ENCODE measurements at regions of chr10 and their contacts with region 1.

Region 1: GRCh38 chr10:23994479-23995046 is 214.4 kb upstream of the KIAA1217 start:
- DNase-seq: no peak
- H3K4me3 ChIP-seq: no peak overlapping the region
- H3K27ac ChIP-seq: no peak overlapping the region
- H3K4me1 ChIP-seq: no peaks in the 10 kb centered on the region
- H3K27me3 ChIP-seq: no peaks in the 10 kb centered on the region
- CTCF ChIP-seq: peak in 5 of 6 experiments; percentile 74 to 88 (median 82)
- POLR2A ChIP-seq: no peak

Region 2: DNA sequence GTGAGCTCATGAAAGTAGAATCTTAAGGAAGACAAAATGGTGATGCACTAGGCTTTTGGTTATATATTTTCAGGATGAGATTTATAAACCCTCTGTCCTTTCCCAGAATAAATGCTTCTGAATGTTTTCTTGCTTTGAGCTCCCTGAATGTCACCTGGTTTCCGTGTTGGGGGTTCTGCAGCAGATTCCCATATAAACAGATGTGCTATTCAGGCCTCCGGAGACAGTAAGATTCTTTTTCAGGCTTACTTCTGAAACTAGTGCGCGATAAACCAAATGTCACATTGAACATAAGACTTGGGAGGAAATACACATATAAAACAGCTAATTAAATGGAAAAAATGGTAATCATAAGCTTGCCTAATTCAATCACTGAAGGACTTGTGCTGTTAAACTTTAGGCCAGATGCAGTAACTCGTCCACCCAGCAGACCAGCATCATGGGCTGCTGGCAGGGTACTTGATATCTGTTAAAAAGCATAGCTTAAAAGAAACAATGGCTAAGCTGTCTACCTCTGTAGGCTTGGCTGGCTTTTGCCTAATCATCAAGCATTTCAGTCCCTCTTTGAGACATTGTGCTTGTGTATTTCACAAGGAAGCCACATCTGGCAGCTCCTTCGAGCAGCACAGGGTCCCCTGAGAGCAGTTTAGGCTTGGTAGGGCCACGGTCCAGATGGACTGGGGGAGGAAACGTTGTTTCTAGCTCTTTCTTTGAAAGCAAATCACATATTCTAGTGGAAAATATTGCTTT is 66.8 kb before region 1 on chr10:
- intact Hi-C with region 1: no loop called
- DNase-seq: no peak
- H3K4me3 ChIP-seq: no peak overlapping the region
- H3K27ac ChIP-seq: no peak overlapping the region
- H3K4me1 ChIP-seq: no peaks in the 10 kb centered on the region
- H3K27me3 ChIP-seq: no peaks in the 10 kb centered on the region
- CTCF ChIP-seq: no peak
- POLR2A ChIP-seq: no peak

Region 3: DNA sequence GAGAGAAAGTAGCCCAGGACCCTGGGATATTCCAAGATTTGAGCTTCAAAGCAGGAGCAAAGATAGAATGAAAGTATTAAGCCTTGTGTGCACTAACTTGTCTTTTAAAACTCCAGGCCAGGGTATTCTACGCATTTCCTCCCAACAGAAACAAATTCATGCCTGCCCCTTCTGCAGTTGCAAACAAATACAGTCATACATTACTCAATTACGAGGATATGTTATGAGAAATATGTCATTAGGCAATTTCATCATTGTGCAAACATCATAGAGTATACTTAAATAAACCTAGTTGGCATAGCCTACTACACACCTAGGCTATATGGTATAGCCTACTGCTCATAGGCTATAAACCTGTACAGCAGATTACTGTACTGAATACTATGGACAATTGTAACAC is 59.9 kb after region 1 on chr10:
- intact Hi-C with region 1: no loop called
- DNase-seq: no peak
- H3K4me3 ChIP-seq: no peak overlapping the region
- H3K27ac ChIP-seq: no peak overlapping the region
- H3K4me1 ChIP-seq: no peaks in the 10 kb centered on the region
- H3K27me3 ChIP-seq: no peaks in the 10 kb centered on the region
- CTCF ChIP-seq: no peak
- POLR2A ChIP-seq: no peak

Region 4: GRCh38 chr10:24197263-24197662 is 202.7 kb after region 1 on chr10:
- intact Hi-C with region 1: loop called (anchors 5 kb)
- DNase-seq: no peak
- H3K4me3 ChIP-seq: no peak overlapping the region
- H3K27ac ChIP-seq: no peak overlapping the region
- H3K4me1 ChIP-seq: peaks cover 0 to 9% (median 0%) of the 10 kb centered on the region in 3 donors
- H3K27me3 ChIP-seq: no peaks in the 10 kb centered on the region
- CTCF ChIP-seq: no peak
- POLR2A ChIP-seq: no peak

Region 5: DNA sequence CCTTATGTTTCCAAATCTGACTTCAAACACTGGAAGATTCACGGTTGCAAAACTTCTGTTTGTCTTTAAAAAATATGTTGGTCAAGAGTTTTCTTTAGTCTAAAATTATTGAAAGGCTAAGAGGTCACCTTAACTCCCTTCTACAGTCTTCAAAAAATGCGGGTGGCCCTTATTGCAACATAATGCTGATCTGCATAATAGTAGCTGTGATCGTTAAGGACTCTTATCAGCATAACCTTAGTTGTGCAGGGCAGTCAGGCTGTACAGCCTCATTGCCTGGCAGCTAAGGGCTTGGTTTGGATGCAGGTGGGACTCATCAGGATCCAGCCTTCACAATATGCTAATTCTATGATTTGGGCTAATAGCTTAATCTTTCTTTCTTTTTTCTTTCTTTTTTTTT is 229.4 kb after region 1 on chr10:
- intact Hi-C with region 1: no loop called
- DNase-seq: no peak
- H3K4me3 ChIP-seq: no peak overlapping the region
- H3K27ac ChIP-seq: no peak overlapping the region
- H3K4me1 ChIP-seq: no peaks in the 10 kb centered on the region
- H3K27me3 ChIP-seq: no peaks in the 10 kb centered on the region
- CTCF ChIP-seq: no peak
- POLR2A ChIP-seq: no peak

Region 6: GRCh38 chr10:24360282-24361127 is 365.9 kb after region 1 on chr10:
- intact Hi-C with region 1: loop called (anchors 10 kb)
- DNase-seq: no peak
- H3K4me3 ChIP-seq: no peak overlapping the region
- H3K27ac ChIP-seq: no peak overlapping the region
- H3K4me1 ChIP-seq: peaks cover 3 to 30% (median 8%) of the 10 kb centered on the region in 3 donors
- H3K27me3 ChIP-seq: no peaks in the 10 kb centered on the region
- CTCF ChIP-seq: peak in 5 of 6 experiments; percentile 55 to 79 (median 64)
- POLR2A ChIP-seq: no peak

Region 7: GRCh38 chr10:24518981-24519597 is 524.5 kb after region 1 on chr10:
- intact Hi-C with region 1: loop called (anchors 10 kb)
- DNase-seq: no peak
- H3K4me3 ChIP-seq: no peak overlapping the region
- H3K27ac ChIP-seq: peak overlapping the region in 1 of 4 donors; percentile 9
- H3K4me1 ChIP-seq: peaks cover 0 to 9% (median 7%) of the 10 kb centered on the region in 3 donors
- H3K27me3 ChIP-seq: no peaks in the 10 kb centered on the region
- CTCF ChIP-seq: peak; percentile 45 to 71 (median 62)
- POLR2A ChIP-seq: no peak